Mammary epithelial cell (primary cell): ENCODE measurements at regions of chr7 and their contacts with region 1.

Region 1: GRCh38 chr7:151626422-151627115 is 106.9 kb upstream of the RHEB start:
- DNase-seq: peak; percentile 48
- H3K4me3 ChIP-seq: no peak overlapping the region
- H3K27ac ChIP-seq: no peak overlapping the region
- H3K4me1 ChIP-seq: peaks cover 35% of the 10 kb centered on the region
- H3K27me3 ChIP-seq: no peaks in the 10 kb centered on the region
- CTCF ChIP-seq: peak; percentile 50 to 87

Region 2: DNA sequence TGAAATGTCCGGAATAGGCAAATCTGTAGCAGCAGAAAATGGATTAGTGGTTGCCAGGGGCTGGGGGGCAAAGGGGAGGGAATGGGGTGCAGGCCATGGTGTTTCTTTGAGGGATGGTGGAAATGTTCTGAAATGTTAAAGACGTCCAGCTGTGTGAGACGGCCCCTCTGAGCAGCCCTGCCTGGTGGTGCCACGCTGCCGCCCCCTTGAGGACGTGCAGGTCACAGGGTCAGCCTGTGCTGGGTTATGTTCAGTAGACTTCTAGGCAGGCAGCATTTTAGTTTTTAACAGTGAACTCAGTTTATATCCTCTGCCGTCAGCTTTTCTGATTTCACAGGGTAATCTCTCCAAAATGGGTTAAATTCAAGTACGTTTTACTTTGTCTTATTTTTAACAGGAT is 275.5 kb before region 1 on chr7:
- CTCF ChIA-PET with region 1: no interaction called
- dilution Hi-C with region 1: no loop called
- in situ Hi-C with region 1: no loop called
- intact Hi-C with region 1: no loop called
- DNase-seq: no peak
- H3K4me3 ChIP-seq: no peak overlapping the region
- H3K27ac ChIP-seq: no peak overlapping the region
- H3K4me1 ChIP-seq: no peaks in the 10 kb centered on the region
- H3K27me3 ChIP-seq: no peaks in the 10 kb centered on the region
- CTCF ChIP-seq: peak in 1 of 2 donors; percentile 3

Region 3: GRCh38 chr7:151717415-151717814 is 90.8 kb after region 1 on chr7:
- CTCF ChIA-PET with region 1: no interaction called
- dilution Hi-C with region 1: loop called (anchors 5 kb)
- in situ Hi-C with region 1: no loop called
- intact Hi-C with region 1: no loop called
- DNase-seq: no peak
- H3K4me3 ChIP-seq: no peak overlapping the region
- H3K27ac ChIP-seq: no peak overlapping the region
- H3K4me1 ChIP-seq: peaks cover under 1% of the 10 kb centered on the region
- H3K27me3 ChIP-seq: no peaks in the 10 kb centered on the region
- CTCF ChIP-seq: no peak